ENCODE measurements at regions of chr2 and their contacts with region 1.

Region 1: DNA sequence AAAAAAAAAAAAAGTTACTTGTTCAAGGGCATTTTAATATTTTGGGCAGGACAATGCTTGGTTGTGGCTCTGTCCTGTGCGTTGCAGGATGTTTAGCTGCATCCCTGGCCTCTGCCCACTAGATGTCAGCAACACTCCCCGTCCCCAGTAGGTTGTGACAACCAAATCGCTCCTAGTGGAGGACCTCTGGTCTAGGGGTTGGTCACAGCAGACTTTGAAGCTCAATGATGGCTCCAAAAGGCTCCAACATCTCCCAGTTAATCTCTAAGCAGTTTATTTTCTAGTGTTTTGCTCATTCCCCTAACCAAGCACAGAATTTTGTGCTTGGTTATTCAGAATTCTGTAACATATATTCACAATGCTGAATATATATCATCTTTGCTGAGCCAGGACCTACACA is 67.0 kb downstream of the CHRNA1 start:
- DNase-seq: peak; percentile 29
- ATAC-seq: peak; percentile 98
- H3K4me3 Mint-ChIP-seq: no peak overlapping the region
- H3K27ac Mint-ChIP-seq: no peak overlapping the region
- H3K4me1 Mint-ChIP-seq: peaks cover 2% of the 10 kb centered on the region
- H3K27me3 Mint-ChIP-seq: peaks cover 15% of the 10 kb centered on the region
- CTCF ChIP-seq: no peak

Region 2: DNA sequence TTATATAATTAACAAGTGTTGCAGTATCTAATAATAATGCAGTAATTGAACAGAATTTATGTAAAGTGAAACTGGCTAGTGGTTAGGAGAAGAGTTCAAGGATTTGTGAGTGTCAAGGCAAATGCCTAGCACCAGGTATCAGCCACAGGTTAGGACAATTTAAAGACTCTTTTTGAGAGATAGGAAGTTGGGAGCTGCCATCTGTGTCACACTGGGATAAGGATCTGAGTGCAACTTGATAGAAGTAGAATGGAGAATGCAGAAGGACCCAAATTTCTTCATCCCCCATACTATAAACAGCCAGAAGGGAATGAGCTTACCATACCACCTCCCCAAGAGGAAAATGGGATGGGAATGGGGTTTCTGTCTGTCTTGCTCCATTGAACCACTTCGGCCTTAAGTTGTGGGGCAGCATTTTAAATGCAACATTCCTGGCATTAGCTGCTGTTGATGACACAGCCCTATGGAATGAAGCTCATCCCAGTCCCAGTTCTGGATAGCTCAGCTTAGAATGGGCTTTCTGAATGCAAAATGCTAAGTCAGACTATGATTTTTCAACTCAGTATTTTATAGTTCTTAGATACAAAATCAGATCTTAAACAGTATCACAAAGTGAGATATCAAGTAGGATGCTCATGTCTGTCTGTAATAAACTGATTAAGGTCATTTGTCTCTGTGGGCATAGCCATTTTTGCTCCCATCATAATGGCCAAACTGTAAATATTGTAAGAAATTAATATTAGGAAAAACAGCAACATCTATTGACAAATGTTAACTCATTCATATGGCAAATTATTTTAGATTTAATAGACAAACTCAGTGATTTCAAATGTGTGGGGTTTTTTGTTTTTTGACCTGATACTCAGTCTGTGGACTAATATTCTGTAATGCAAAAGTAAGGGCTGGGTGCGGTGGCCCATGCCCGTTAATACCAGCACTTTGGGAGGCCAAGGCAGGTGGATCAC is 254.4 kb before region 1 on chr2:
- CTCF ChIA-PET with region 1: interaction called, 7 read pairs
- POLR2A ChIA-PET with region 1: interaction called, 10 read pairs
- intact Hi-C with region 1: no loop called
- DNase-seq: no peak
- ATAC-seq: no peak
- H3K4me3 Mint-ChIP-seq: no peak overlapping the region
- H3K27ac Mint-ChIP-seq: no peak overlapping the region
- H3K4me1 Mint-ChIP-seq: no peaks in the 10 kb centered on the region
- H3K27me3 Mint-ChIP-seq: no peaks in the 10 kb centered on the region
- CTCF ChIP-seq: no peak

Region 3: DNA sequence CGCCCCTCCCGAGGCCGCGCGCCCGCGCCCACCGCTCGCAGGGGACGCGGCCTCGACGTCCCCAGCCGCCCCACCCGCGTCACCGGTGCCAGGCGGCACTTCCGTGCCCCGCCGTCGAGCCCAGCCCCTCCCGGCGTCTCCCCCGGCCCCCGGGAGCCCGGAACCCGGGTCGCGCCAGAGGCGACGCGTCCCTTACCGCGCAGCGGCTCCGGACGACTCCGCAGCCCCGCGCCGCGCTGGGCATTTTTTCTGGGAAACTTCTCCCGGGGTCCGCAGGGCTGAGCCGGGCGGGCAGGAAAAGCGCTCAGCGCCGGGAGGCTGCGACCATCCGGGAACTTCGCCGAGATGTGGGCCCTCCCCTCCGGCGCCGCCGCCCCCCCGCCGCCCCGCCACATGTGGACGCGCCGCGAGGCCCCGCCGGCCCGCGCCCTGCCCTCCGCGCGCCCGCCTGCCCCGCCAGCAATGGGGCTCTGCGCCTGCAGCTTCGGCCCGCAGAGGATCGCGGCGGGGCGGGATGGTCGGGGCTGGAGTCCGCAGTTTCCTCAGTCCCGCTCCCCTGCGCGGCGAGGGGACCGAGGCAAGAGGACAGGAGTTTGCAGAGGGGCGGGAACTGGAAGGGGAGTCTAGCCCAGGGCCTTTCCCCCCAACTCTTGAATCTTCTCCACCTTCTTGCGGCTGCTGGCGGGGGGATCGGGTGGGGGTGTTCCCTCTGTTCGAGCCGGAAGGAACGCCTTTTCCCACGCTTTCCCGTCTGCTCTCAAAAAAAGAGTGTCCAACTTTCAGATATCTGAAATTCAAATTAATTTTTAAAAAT is 14.5 kb before region 1 on chr2:
- CTCF ChIA-PET with region 1: interaction called, 90 read pairs
- POLR2A ChIA-PET with region 1: interaction called, 3 read pairs
- intact Hi-C with region 1: no loop called
- DNase-seq: peak; percentile 63
- ATAC-seq: peak; percentile 74
- H3K4me3 Mint-ChIP-seq: peak overlapping the region; percentile 90
- H3K27ac Mint-ChIP-seq: peak overlapping the region; percentile 83
- H3K4me1 Mint-ChIP-seq: peaks cover 16% of the 10 kb centered on the region
- H3K27me3 Mint-ChIP-seq: no peaks in the 10 kb centered on the region
- CTCF ChIP-seq: no peak

Region 4: GRCh38 chr2:174748948-174749347 is 51.7 kb after region 1 on chr2:
- CTCF ChIA-PET with region 1: interaction called, 7 read pairs
- POLR2A ChIA-PET with region 1: no interaction called
- intact Hi-C with region 1: loop called (anchors 1 kb)
- DNase-seq: peak; percentile 41
- ATAC-seq: peak; percentile 35
- H3K4me3 Mint-ChIP-seq: peak overlapping the region; percentile 47
- H3K27ac Mint-ChIP-seq: peak overlapping the region; percentile 44
- H3K4me1 Mint-ChIP-seq: peaks cover 47% of the 10 kb centered on the region
- H3K27me3 Mint-ChIP-seq: peaks cover 3% of the 10 kb centered on the region
- CTCF ChIP-seq: peak; percentile 67

Region 5: DNA sequence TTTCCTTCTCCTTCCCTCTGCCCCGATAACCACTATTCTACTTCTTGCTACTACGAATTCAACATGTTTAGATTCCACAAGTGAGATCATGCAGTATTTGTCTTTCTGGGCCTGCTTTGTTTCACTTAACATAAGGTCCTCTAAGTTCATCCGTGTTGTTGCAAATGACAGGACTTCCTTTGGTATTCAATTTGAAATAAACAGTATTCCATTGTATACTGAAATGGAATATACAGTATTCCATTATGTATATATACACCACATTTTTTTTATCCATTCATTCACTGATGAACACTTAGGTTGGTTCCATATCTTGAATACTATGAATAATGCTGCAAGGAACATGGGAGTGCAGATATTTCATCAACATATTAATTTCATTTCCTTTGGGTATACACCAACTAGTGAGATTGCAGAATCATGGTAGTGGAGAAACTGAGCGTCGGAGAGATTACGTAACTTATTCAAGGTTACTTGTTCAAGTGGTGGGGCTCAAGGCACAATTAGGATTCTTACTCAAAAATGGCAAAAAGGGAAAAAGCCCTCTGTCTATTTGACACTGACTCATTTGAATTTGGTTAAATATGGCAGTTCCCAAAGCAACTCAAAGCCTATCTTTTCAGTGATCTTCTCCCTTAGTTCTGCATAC is 222.8 kb after region 1 on chr2:
- CTCF ChIA-PET with region 1: no interaction called
- POLR2A ChIA-PET with region 1: no interaction called
- intact Hi-C with region 1: no loop called
- DNase-seq: no peak
- ATAC-seq: no peak
- H3K4me3 Mint-ChIP-seq: no peak overlapping the region
- H3K27ac Mint-ChIP-seq: no peak overlapping the region
- H3K4me1 Mint-ChIP-seq: no peaks in the 10 kb centered on the region
- H3K27me3 Mint-ChIP-seq: no peaks in the 10 kb centered on the region
- CTCF ChIP-seq: no peak

Region 6: DNA sequence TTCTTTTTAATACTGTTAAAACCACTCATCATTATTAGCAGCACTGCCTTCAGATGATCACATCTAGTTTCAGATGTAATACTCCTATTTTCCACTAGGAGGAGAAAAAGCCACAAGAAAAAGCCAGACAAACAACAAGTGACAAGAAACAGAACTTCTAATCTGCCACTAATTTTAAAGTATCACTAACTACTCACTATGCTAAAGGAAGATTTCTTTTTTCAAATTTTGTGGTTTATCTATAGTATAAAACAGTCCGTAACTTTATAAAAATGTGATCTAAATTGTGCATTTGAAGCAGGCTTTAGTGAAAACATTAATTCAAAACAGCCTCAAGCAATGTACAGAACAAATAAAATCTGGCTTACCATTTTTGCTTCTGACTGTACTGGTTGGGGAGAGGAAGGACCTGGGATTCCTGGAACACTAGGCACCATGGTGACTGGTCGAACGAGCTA is 414.0 kb after region 1 on chr2:
- CTCF ChIA-PET with region 1: no interaction called
- POLR2A ChIA-PET with region 1: no interaction called
- intact Hi-C with region 1: loop called (anchors 5 kb)
- DNase-seq: no peak
- ATAC-seq: peak; percentile 47
- H3K4me3 Mint-ChIP-seq: no peak overlapping the region
- H3K27ac Mint-ChIP-seq: no peak overlapping the region
- H3K4me1 Mint-ChIP-seq: no peaks in the 10 kb centered on the region
- H3K27me3 Mint-ChIP-seq: no peaks in the 10 kb centered on the region
- CTCF ChIP-seq: peak; percentile 60

Measured in activated B cell treated with CpG ODN at 0.5 μM for 24 hours (primary cell).